K562 (cell line): ENCODE measurements at regions of chr18 and their contacts with region 1.

Region 1: DNA sequence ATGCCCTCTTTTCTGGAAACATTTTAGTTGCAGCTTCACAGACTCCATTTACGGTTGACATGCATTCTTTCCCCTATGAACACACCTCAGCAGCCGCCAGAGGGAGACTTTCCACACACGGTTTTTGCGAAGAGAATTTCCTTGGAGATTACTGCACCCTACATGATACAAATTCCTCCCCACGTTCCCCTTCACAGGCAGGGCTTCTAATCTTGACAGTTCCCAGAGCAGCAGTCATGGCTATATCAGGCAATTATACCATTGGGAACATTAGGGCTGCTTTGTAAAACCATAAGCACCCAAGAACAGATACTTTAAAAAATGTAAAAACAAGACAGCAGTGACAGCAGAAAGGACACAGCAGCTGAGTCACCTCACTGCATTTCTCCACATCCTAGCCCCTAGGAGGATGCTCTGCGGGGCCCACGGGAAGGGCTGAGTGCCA is 253.8 kb downstream of the TGIF1 start:
- DNase-seq: peak; percentile 74 to 85 (median 80)
- ATAC-seq: peak; percentile 82
- H3K4me3 ChIP-seq: no peak overlapping the region
- H3K27ac ChIP-seq: no peak overlapping the region
- H3K4me1 ChIP-seq: peaks cover 24 to 37% of the 10 kb centered on the region in 2 experiments; a peak in 3 of 5 replicates
- H3K27me3 ChIP-seq: no peaks in the 10 kb centered on the region
- CTCF ChIP-seq: peak; percentile 85 to 96 (median 86)
- EP300 ChIP-seq: no peak
- POLR2A ChIP-seq: no peak
- RAD21 ChIP-seq: peak; percentile 79 to 87

Region 2: DNA sequence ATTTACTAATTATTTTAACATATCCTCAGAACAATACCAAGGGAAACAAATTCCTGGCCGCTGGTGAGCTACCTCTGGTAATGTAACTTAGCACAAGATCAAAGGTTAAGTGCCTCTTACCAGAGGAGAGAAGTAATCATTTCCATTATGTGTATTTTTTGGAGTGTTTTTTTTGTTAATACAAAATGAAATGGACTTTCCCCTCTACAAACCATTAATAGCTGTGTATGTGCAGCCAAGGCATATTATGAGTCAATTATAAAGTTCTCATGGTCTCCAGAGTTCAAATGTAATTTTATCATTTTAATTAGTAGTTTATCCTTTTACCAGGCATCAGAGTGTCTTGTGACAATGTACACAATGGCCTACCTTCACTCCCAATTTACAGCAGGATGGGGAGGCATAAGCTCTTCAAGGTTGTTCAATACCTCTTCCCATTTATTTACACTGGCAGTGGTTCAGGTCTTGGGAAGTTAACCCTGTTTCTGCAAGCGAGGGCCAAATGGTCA is 11.6 kb before region 1 on chr18:
- CTCF ChIA-PET with region 1: no interaction called
- POLR2A ChIA-PET with region 1: interaction called, 12 read pairs
- in situ Hi-C with region 1: no loop called
- intact Hi-C with region 1: no loop called
- DNase-seq: no peak
- ATAC-seq: no peak
- H3K4me3 ChIP-seq: no peak overlapping the region
- H3K27ac ChIP-seq: no peak overlapping the region
- H3K4me1 ChIP-seq: no peaks in the 10 kb centered on the region; a peak in 1 of 5 replicates
- H3K27me3 ChIP-seq: no peaks in the 10 kb centered on the region
- CTCF ChIP-seq: no peak
- EP300 ChIP-seq: no peak
- POLR2A ChIP-seq: no peak
- RAD21 ChIP-seq: no peak

Region 3: DNA sequence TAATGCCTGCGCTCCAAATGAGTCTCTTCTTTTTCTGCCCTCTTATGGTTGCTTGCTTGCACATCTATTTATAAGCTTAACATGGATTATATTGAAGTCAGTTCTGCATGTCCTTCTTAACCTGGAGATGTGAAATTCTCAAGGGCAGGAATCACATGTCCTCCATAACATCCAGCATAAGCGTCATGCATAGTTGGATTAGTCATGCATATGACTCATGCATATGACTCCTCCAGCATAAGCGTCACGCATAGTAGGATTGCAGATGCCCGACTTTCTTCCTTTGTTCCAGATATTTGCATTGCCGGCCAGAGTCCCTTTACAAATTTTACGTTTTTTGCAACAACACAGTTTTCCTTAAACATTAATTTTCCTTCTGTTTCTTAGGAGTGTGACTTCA is 54.8 kb after region 1 on chr18:
- CTCF ChIA-PET with region 1: no interaction called
- POLR2A ChIA-PET with region 1: no interaction called
- in situ Hi-C with region 1: no loop called
- intact Hi-C with region 1: no loop called
- DNase-seq: peak in 1 of 4 experiments; percentile 20
- ATAC-seq: no peak
- H3K4me3 ChIP-seq: no peak overlapping the region
- H3K27ac ChIP-seq: no peak overlapping the region
- H3K4me1 ChIP-seq: no peaks in the 10 kb centered on the region
- H3K27me3 ChIP-seq: peaks cover 11 to 17% of the 10 kb centered on the region in 2 experiments; a peak in 3 of 5 replicates
- CTCF ChIP-seq: no peak
- EP300 ChIP-seq: no peak
- POLR2A ChIP-seq: no peak
- RAD21 ChIP-seq: no peak

Region 4: GRCh38 chr18:3771121-3771971 is 67.6 kb after region 1 on chr18:
- CTCF ChIA-PET with region 1: no interaction called
- POLR2A ChIA-PET with region 1: interaction called, 10 read pairs
- in situ Hi-C with region 1: no loop called
- intact Hi-C with region 1: loop called (anchors 1 kb)
- DNase-seq: peak; percentile 84 to 93 (median 91)
- ATAC-seq: peak; percentile 100
- H3K4me3 ChIP-seq: peak overlapping the region; percentile 9; the same call in 1 of the 2 replicates
- H3K27ac ChIP-seq: no peak overlapping the region
- H3K4me1 ChIP-seq: peaks cover 6 to 8% of the 10 kb centered on the region in 2 experiments; a peak in 4 of 5 replicates
- H3K27me3 ChIP-seq: peaks cover 20% of the 10 kb centered on the region in 2 experiments; a peak in 4 of 5 replicates
- CTCF ChIP-seq: peak; percentile 91 to 97 (median 92)
- EP300 ChIP-seq: 0 out of 2 replicates have a peak, but pooled peaks have one; percentile 31
- POLR2A ChIP-seq: no peak
- RAD21 ChIP-seq: peak; percentile 87 to 94

Region 5: GRCh38 chr18:3869848-3870247 is 166.1 kb after region 1 on chr18:
- CTCF ChIA-PET with region 1: interaction called, 24 read pairs
- POLR2A ChIA-PET with region 1: interaction called, 4 read pairs
- in situ Hi-C with region 1: no loop called
- intact Hi-C with region 1: loop called (anchors 1 kb)
- DNase-seq: peak in 3 of 4 experiments; percentile 14 to 61 (median 49)
- ATAC-seq: peak; percentile 93
- H3K4me3 ChIP-seq: no peak overlapping the region
- H3K27ac ChIP-seq: no peak overlapping the region
- H3K4me1 ChIP-seq: no peaks in the 10 kb centered on the region
- H3K27me3 ChIP-seq: no peaks in the 10 kb centered on the region
- CTCF ChIP-seq: peak; percentile 32 to 76 (median 57); a peak in 5 of 6 replicates
- EP300 ChIP-seq: no peak
- POLR2A ChIP-seq: no peak
- RAD21 ChIP-seq: peak; percentile 79 to 89

Region 6: GRCh38 chr18:3995476-3996102 is 291.8 kb after region 1 on chr18:
- CTCF ChIA-PET with region 1: interaction called, 11 read pairs
- POLR2A ChIA-PET with region 1: no interaction called
- in situ Hi-C with region 1: no loop called
- intact Hi-C with region 1: loop called (anchors 2 kb)
- DNase-seq: peak; percentile 38 to 84 (median 48)
- ATAC-seq: peak; percentile 84
- H3K4me3 ChIP-seq: no peak overlapping the region
- H3K27ac ChIP-seq: no peak overlapping the region
- H3K4me1 ChIP-seq: no peaks in the 10 kb centered on the region
- H3K27me3 ChIP-seq: peaks cover 0 to 5% of the 10 kb centered on the region in 2 experiments; a peak in 1 of 5 replicates
- CTCF ChIP-seq: peak; percentile 76 to 90 (median 80)
- EP300 ChIP-seq: no peak
- POLR2A ChIP-seq: no peak
- RAD21 ChIP-seq: peak; percentile 52 to 66; a peak in 3 of 4 replicates